Endothelial cell of umbilical vein (primary cell): ENCODE measurements at regions of chr12 and their contacts with region 1.

Region 1: GRCh38 chr12:57389033-57389432 is 41.8 kb downstream of the R3HDM2 start:
- DNase-seq: peak; percentile 72
- H3K4me3 ChIP-seq: no peak overlapping the region
- H3K27ac ChIP-seq: peak overlapping the region; percentile 52
- H3K4me1 ChIP-seq: peaks cover 22% of the 10 kb centered on the region
- H3K27me3 ChIP-seq: no peaks in the 10 kb centered on the region
- CTCF ChIP-seq: no peak
- POLR2A ChIP-seq: no peak

Region 2: DNA sequence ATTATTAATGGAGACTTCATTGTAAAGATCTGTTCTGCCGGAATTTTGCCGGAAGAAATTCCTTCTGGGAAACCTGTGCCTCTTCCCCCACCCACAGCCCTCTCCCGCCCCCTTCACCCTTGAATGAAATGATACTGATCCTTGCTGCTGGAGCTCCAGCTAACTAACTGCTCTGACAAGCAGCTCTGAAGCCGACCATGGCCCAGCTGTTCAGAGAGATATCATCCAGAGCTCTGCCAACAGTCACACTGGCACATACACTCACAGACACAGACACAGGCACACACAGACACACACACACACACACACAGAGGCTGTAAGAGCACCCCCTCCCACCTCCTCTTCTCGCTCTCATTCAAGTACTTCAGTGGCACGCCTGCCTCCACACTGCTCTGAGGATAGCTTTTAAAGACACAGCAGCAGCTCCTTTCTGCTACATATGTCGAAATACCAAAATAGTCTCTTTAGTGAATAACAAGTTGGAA is 46.8 kb before region 1 on chr12:
- CTCF ChIA-PET with region 1: no interaction called
- POLR2A ChIA-PET with region 1: no interaction called
- dilution Hi-C with region 1: no loop called
- intact Hi-C with region 1: loop called (anchors 1 kb)
- DNase-seq: peak; percentile 5
- H3K4me3 ChIP-seq: no peak overlapping the region
- H3K27ac ChIP-seq: no peak overlapping the region
- H3K4me1 ChIP-seq: no peaks in the 10 kb centered on the region
- H3K27me3 ChIP-seq: no peaks in the 10 kb centered on the region
- CTCF ChIP-seq: no peak
- POLR2A ChIP-seq: no peak